ENCODE measurements at regions of chr2 and their contacts with region 1.

Region 1: GRCh38 chr2:147937744-147938349 is 82.7 kb downstream of the ORC4 start:
- DNase-seq: no peak

Region 2: GRCh38 chr2:147756103-147756502 is 181.7 kb before region 1 on chr2:
- intact Hi-C with region 1: no loop called
- DNase-seq: no peak

Region 3: GRCh38 chr2:147980940-147981528 is 43.2 kb after region 1 on chr2:
- intact Hi-C with region 1: no loop called
- DNase-seq: no peak

Region 4: GRCh38 chr2:148509288-148509902 is 571.5 kb after region 1 on chr2:
- intact Hi-C with region 1: loop called (anchors 5 kb)
- DNase-seq: peak; percentile 89

Region 5: DNA sequence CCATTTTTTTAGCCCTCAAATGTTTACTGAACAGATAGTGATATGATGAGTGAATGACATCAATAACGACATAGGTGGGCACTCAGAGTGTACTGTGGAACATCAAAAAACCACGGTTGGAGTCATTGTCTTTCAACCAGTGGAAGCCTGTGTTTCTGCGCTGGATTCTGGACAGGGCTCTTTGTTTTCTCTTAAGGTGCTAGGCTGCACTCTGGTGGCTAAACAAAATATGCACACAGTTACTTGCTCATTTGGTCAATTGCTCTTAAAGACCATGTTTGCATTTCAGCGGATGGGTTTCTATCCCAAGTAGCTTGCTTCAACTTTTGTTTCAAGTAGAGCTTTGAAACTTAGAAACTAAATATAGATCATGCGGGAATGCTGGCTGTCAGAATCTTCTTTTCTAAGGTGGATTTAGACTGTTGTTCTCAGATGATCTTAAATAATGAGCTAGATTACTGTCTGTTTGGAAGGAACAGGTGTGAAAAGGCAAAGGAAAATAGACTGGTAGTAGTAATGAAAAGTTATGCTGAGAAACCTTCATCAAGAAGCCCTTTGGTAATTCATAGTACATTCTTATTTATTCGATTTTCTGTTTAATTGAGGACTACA is 1052.1 kb after region 1 on chr2:
- intact Hi-C with region 1: loop called (anchors 5 kb)
- DNase-seq: no peak